Caco-2 (cell line): ENCODE measurements at regions of chrX and their contacts with region 1.

Region 1: GRCh38 chrX:11143931-11144678 is 33.0 kb downstream of the HCCS start:
- DNase-seq: peak; percentile 56 to 69
- H3K4me3 ChIP-seq: no peak overlapping the region
- H3K4me3 Mint-ChIP-seq: no peak overlapping the region
- H3K27ac Mint-ChIP-seq: no peak overlapping the region
- H3K4me1 ChIP-seq: no peaks in the 10 kb centered on the region
- H3K4me1 Mint-ChIP-seq: peaks cover 6% of the 10 kb centered on the region
- H3K27me3 ChIP-seq: no peaks in the 10 kb centered on the region
- H3K27me3 Mint-ChIP-seq: no peaks in the 10 kb centered on the region
- CTCF ChIP-seq: peak; percentile 39 to 52

Region 2: DNA sequence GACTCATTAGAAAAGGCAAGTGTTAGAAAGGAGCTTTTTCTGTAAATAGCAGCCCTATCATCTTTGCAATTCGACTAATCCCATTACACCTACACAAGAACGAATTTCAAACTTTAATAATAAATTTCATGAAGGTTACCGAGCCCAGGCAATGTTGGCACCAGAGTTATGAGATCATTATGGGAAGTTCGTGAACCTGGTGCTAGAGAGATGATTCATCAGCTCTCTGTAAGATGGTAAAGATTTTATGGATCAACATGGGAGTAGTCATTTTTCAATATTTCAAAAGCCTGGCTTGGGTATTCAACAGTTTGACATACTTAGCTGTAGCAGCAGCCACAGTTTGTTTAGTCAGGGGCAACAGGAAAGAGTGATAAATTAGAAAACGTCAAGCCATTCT is 184.9 kb after region 1 on chrX:
- CTCF ChIA-PET with region 1: no interaction called
- POLR2A ChIA-PET with region 1: no interaction called
- intact Hi-C with region 1: loop called (anchors 1 kb)
- DNase-seq: no peak
- H3K4me3 ChIP-seq: no peak overlapping the region
- H3K4me3 Mint-ChIP-seq: no peak overlapping the region
- H3K27ac Mint-ChIP-seq: no peak overlapping the region
- H3K4me1 ChIP-seq: peaks cover 13% of the 10 kb centered on the region
- H3K4me1 Mint-ChIP-seq: no peaks in the 10 kb centered on the region
- H3K27me3 ChIP-seq: no peaks in the 10 kb centered on the region
- H3K27me3 Mint-ChIP-seq: no peaks in the 10 kb centered on the region
- CTCF ChIP-seq: no peak

Region 3: DNA sequence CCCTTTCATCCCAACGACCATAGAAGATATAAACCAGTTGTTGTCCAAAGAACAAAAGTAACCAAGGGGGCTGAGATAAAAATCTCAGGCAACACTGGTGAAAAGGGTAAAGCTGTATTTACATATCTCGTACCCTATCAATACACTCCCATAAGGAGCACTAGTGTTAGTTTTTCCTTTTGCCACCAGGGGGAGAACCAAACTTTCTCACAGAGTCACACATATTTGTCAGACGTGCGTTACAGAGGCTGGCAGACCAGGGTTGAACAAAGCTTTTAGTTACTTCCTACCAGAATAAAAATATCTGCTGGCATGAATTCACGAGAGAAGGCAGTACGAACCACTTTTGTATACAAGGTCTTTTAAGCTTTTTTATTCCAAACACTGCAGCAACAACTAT is 237.4 kb after region 1 on chrX:
- CTCF ChIA-PET with region 1: no interaction called
- POLR2A ChIA-PET with region 1: no interaction called
- intact Hi-C with region 1: loop called (anchors 2 kb)
- DNase-seq: peak; percentile 33 to 54
- H3K4me3 ChIP-seq: no peak overlapping the region
- H3K4me3 Mint-ChIP-seq: no peak overlapping the region
- H3K27ac Mint-ChIP-seq: no peak overlapping the region
- H3K4me1 ChIP-seq: peaks cover 19% of the 10 kb centered on the region
- H3K4me1 Mint-ChIP-seq: peaks cover 3% of the 10 kb centered on the region
- H3K27me3 ChIP-seq: no peaks in the 10 kb centered on the region
- H3K27me3 Mint-ChIP-seq: no peaks in the 10 kb centered on the region
- CTCF ChIP-seq: peak; percentile 44 to 45

Region 4: DNA sequence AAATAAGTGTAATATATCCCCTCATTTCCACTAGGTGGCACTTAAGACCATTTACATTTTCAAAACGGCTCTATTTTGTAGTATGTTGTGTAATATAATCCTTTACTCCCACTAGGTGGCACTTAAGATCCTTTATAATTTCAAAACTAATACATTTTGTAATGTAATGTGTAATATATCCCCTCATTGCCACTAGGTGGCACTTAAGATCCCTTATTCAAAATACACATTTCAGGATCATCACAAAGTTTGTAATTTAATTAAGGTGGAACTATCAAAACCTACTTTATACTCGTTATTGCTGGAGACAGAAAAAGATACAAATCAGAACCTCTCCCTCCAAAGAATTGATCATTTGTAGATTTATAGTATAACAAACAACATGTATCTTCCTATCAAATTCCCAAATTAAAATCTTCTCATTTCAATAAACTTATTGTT is 389.1 kb after region 1 on chrX:
- CTCF ChIA-PET with region 1: interaction called, 5 read pairs
- POLR2A ChIA-PET with region 1: no interaction called
- intact Hi-C with region 1: loop called (anchors 1 kb)
- DNase-seq: peak in 1 of 2 experiments; percentile 18
- H3K4me3 ChIP-seq: no peak overlapping the region
- H3K4me3 Mint-ChIP-seq: no peak overlapping the region
- H3K27ac Mint-ChIP-seq: no peak overlapping the region
- H3K4me1 ChIP-seq: peaks cover 23% of the 10 kb centered on the region
- H3K4me1 Mint-ChIP-seq: no peaks in the 10 kb centered on the region
- H3K27me3 ChIP-seq: no peaks in the 10 kb centered on the region
- H3K27me3 Mint-ChIP-seq: no peaks in the 10 kb centered on the region
- CTCF ChIP-seq: peak; percentile 58 to 68

Region 5: DNA sequence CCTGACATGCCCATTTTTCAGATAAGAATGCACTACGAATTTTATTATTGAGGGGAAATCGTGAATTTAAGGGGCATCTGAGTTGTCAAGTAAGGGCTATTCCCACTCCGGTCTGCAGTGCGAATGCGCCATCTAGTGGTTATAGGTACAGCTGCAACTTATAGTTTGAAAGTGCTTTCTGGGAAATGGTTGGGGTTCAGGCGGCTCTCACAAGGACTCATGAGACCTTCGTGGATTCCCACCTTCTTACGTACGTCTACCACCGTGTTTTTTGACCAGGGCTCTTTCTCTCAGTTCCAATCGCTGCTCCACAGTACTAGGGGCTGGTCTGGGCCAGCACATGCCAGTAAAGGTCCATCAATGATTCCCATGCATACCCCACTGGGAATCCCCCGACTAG is 626.2 kb after region 1 on chrX:
- CTCF ChIA-PET with region 1: no interaction called
- POLR2A ChIA-PET with region 1: no interaction called
- intact Hi-C with region 1: loop called (anchors 10 kb)
- DNase-seq: peak in 1 of 2 experiments; percentile 22
- H3K4me3 ChIP-seq: no peak overlapping the region
- H3K4me3 Mint-ChIP-seq: no peak overlapping the region
- H3K27ac Mint-ChIP-seq: no peak overlapping the region
- H3K4me1 ChIP-seq: no peaks in the 10 kb centered on the region
- H3K4me1 Mint-ChIP-seq: no peaks in the 10 kb centered on the region
- H3K27me3 ChIP-seq: no peaks in the 10 kb centered on the region
- H3K27me3 Mint-ChIP-seq: no peaks in the 10 kb centered on the region
- CTCF ChIP-seq: peak; percentile 61 to 73